ENCODE measurements at regions of chr9 and their contacts with region 1.

Region 1: DNA sequence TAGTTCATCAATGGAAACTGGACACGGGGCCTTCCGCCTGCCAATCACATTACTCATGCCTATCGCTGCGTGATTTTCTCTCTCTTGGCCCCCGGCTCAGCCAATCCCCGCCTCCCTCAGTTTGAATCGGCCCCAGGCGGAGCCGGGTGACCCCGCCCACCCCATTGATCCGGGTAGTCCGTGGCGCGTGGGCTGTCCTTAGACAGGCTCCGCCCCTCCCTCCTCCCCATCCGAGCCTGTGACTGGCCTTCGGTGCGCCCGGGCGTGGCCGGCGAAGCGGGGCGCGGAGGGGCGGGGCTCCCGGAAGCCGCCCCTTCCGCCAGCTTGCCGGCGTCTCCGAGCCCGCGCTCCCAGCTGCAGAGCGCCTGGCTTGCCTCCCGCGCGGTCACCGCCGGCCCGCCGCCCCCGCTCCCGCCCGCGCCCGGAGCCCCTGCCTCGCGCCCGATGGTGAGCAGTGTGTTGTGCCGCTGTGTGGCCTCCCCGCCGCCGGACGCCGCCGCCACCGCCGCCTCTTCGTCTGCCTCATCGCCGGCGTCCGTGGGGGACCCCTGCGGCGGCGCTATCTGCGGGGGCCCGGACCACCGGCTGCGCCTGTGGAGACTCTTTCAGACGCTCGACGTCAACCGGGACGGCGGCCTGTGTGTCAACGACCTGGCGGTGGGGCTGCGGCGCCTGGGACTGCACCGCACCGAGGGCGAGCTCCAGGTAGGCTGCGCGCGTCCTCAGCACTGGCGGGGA is at the start of gene SLC25A25:
- DNase-seq: peak; percentile 100
- H3K4me3 ChIP-seq: peak within 1 kb of the TSS; percentile 30 to 79 (median 75)
- H3K27ac ChIP-seq: peak within 1 kb of the TSS; percentile 96
- H3K4me1 ChIP-seq: peaks cover 25% of the 10 kb centered on the region
- H3K27me3 ChIP-seq: no peaks in the 10 kb centered on the region
- CTCF ChIP-seq: no peak
- POLR2A ChIP-seq: peak; percentile 61
- total RNA-seq, gene SLC25A25: 20.1 and 20.2 TPM in 2 replicates

Region 2: GRCh38 chr9:128081056-128081455 is 13.0 kb after region 1 on chr9:
- CTCF ChIA-PET with region 1: interaction called, 10 read pairs
- POLR2A ChIA-PET with region 1: interaction called, 8 read pairs
- dilution Hi-C with region 1: no loop called
- intact Hi-C with region 1: loop called (anchors 1 kb)
- DNase-seq: peak; percentile 41
- H3K4me3 ChIP-seq: no peak overlapping the region
- H3K27ac ChIP-seq: no peak overlapping the region
- H3K4me1 ChIP-seq: peaks cover 18% of the 10 kb centered on the region
- H3K27me3 ChIP-seq: no peaks in the 10 kb centered on the region
- CTCF ChIP-seq: no peak
- POLR2A ChIP-seq: no peak

Region 3: GRCh38 chr9:128088253-128088945 is 20.4 kb after region 1 on chr9:
- CTCF ChIA-PET with region 1: interaction called, 6 read pairs
- POLR2A ChIA-PET with region 1: interaction called, 3 read pairs
- dilution Hi-C with region 1: no loop called
- intact Hi-C with region 1: loop called (anchors 1 kb)
- DNase-seq: no peak
- H3K4me3 ChIP-seq: no peak overlapping the region
- H3K27ac ChIP-seq: no peak overlapping the region
- H3K4me1 ChIP-seq: peaks cover 15% of the 10 kb centered on the region
- H3K27me3 ChIP-seq: no peaks in the 10 kb centered on the region
- CTCF ChIP-seq: no peak
- POLR2A ChIP-seq: no peak

Region 4: GRCh38 chr9:128094166-128094967 is 26.3 kb after region 1 on chr9:
- CTCF ChIA-PET with region 1: interaction called, 6 read pairs
- POLR2A ChIA-PET with region 1: interaction called, 3 read pairs
- dilution Hi-C with region 1: no loop called
- intact Hi-C with region 1: loop called (anchors 1 kb)
- DNase-seq: peak; percentile 98
- H3K4me3 ChIP-seq: peak overlapping the region in 2 of 3 experiments; percentile 22 to 54
- H3K27ac ChIP-seq: peak overlapping the region; percentile 93
- H3K4me1 ChIP-seq: peaks cover 33% of the 10 kb centered on the region
- H3K27me3 ChIP-seq: no peaks in the 10 kb centered on the region
- CTCF ChIP-seq: no peak
- POLR2A ChIP-seq: peak; percentile 67

Region 5: GRCh38 chr9:128127990-128128835 is 60.2 kb after region 1 on chr9:
- CTCF ChIA-PET with region 1: interaction called, 6 read pairs
- POLR2A ChIA-PET with region 1: no interaction called
- dilution Hi-C with region 1: no loop called
- intact Hi-C with region 1: loop called (anchors 1 kb)
- DNase-seq: peak; percentile 84
- H3K4me3 ChIP-seq: peak overlapping the region; percentile 83 to 92 (median 90)
- H3K27ac ChIP-seq: peak overlapping the region; percentile 76
- H3K4me1 ChIP-seq: peaks cover 11% of the 10 kb centered on the region
- H3K27me3 ChIP-seq: peaks cover 8 to 9% of the 10 kb centered on the region in 2 experiments
- CTCF ChIP-seq: no peak
- POLR2A ChIP-seq: peak; percentile 32